AG04449 (cell line): ENCODE measurements at regions of chr9 and their contacts with region 1.

Region 1: DNA sequence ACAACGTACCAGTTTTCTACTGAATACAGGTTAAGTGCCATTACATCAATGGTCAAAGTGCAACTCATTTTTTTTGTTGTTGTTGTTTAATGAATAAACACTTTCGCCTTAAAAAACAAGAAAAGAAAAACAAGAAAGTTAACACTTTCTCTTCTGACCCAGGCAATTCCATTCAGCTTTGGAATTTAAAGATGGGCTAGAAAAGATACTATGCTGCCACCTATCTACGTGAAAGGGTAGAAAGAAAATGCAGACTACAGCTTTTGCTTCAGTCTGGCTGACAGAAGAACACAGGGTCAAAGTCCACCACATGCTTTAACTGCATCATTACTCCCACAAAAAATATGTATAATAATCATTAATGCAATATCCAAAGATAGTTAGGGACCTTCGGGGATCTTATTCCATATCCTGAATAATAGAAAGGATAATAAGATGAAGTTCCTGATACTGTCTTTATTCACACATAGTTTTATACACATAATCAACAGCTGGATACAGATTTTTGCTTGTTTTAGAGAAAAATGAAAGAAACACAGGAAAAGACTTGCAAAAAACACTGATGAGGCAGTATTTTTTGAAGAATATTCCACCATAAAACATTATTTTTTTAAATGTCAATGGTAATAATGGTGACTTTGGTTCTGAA is 40.4 kb downstream of the ZDHHC21 start:
- DNase-seq: no peak
- H3K4me3 ChIP-seq: no peak overlapping the region
- CTCF ChIP-seq: peak; percentile 30

Region 2: GRCh38 chr9:14670718-14671117 is 17.9 kb after region 1 on chr9:
- CTCF ChIA-PET with region 1: interaction called, 10 read pairs
- POLR2A ChIA-PET with region 1: no interaction called
- DNase-seq: no peak
- H3K4me3 ChIP-seq: no peak overlapping the region
- CTCF ChIP-seq: no peak